CD4-positive, alpha-beta T cell (primary cell): ENCODE measurements at regions of chr18 and their contacts with region 1.

Region 1: GRCh38 chr18:22933206-22933957 is at the start of gene RBBP8:
- DNase-seq: peak; percentile 55 to 90 (median 74)
- ATAC-seq: peak; percentile 67
- H3K4me3 ChIP-seq: peak within 1 kb of the TSS; percentile 97
- H3K4me3 Mint-ChIP-seq: peak within 1 kb of the TSS; percentile 89
- H3K27ac ChIP-seq: peak within 1 kb of the TSS; percentile 80 to 95
- H3K27ac Mint-ChIP-seq: peak within 1 kb of the TSS; percentile 67
- H3K4me1 ChIP-seq: peaks cover 8% of the 10 kb centered on the region
- H3K4me1 Mint-ChIP-seq: peaks cover 13% of the 10 kb centered on the region
- H3K27me3 ChIP-seq: no peaks in the 10 kb centered on the region
- H3K27me3 Mint-ChIP-seq: no peaks in the 10 kb centered on the region
- CTCF ChIP-seq: no peak
- total RNA-seq, gene RBBP8: 1.2 to 2.5 TPM

Region 2: DNA sequence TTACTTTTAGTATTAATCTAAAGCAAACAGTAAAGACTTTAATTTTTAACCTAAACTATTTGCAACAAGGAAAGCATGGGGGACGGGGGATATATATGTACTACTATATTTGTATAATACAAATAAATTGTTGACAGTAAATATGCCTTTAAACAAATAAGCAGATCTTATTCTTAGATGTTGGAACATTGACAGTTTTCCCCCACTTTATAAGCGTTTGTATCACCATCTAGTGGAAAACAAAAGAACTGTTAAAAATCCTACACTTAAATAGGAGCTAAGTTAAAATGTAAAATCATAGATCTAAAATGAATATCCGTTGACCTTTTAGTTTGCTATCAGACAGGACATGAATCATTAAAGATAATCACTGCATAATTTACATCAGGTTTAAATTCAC is 49.8 kb after region 1 on chr18:
- CTCF ChIA-PET with region 1: interaction called, 7 read pairs
- POLR2A ChIA-PET with region 1: interaction called, 5 read pairs
- intact Hi-C with region 1: loop called (anchors 1 to 2 kb)
- DNase-seq: peak in 3 of 14 experiments; percentile 42 to 46 (median 45)
- ATAC-seq: no peak
- H3K4me3 ChIP-seq: no peak overlapping the region
- H3K4me3 Mint-ChIP-seq: no peak overlapping the region
- H3K27ac ChIP-seq: no peak overlapping the region
- H3K27ac Mint-ChIP-seq: no peak overlapping the region
- H3K4me1 ChIP-seq: no peaks in the 10 kb centered on the region
- H3K4me1 Mint-ChIP-seq: no peaks in the 10 kb centered on the region
- H3K27me3 ChIP-seq: no peaks in the 10 kb centered on the region
- H3K27me3 Mint-ChIP-seq: no peaks in the 10 kb centered on the region
- CTCF ChIP-seq: peak; percentile 68

Region 3: DNA sequence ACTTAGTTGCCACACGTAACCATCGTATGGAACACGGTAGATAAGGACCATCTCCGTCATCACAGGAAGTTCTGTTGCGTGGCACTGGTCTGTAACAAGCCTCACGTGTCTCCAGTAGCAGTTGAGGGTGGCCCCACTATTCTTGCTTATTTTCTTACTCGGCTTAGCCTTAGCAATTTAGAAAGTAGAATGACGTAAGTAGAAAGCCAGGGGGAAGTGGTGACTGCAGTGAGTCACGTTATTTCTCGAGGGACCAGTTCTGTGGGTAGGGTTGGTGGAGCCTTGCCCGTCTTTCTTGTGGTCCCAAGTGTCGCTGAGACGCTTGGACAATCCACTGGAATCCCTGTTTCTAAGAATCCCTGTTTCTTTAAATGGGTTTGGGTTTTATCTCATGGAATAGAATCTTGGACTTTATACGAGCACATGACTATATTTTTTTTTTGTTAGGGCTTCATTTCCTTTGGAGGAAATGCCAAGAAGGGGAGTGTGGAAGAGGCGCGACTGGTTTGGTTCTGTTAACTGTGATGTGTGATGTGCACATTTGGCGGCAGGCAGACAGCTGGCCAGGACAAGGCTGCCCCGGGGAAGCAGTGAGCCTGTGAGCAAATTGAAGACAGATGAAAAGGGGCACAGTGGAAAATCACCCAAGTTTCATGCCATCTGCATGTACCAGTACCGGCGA is 298.1 kb after region 1 on chr18:
- CTCF ChIA-PET with region 1: no interaction called
- POLR2A ChIA-PET with region 1: no interaction called
- intact Hi-C with region 1: loop called in 1 of 2 experiments (anchors 10 kb)
- DNase-seq: peak; percentile 26 to 93 (median 54)
- ATAC-seq: peak; percentile 88
- H3K4me3 ChIP-seq: no peak overlapping the region
- H3K4me3 Mint-ChIP-seq: peak overlapping the region; percentile 57
- H3K27ac ChIP-seq: peak overlapping the region in 1 of 2 donors; percentile 55
- H3K27ac Mint-ChIP-seq: peak overlapping the region; percentile 84
- H3K4me1 ChIP-seq: peaks cover 25% of the 10 kb centered on the region
- H3K4me1 Mint-ChIP-seq: peaks cover 36% of the 10 kb centered on the region
- H3K27me3 ChIP-seq: no peaks in the 10 kb centered on the region
- H3K27me3 Mint-ChIP-seq: no peaks in the 10 kb centered on the region
- CTCF ChIP-seq: no peak

Region 4: DNA sequence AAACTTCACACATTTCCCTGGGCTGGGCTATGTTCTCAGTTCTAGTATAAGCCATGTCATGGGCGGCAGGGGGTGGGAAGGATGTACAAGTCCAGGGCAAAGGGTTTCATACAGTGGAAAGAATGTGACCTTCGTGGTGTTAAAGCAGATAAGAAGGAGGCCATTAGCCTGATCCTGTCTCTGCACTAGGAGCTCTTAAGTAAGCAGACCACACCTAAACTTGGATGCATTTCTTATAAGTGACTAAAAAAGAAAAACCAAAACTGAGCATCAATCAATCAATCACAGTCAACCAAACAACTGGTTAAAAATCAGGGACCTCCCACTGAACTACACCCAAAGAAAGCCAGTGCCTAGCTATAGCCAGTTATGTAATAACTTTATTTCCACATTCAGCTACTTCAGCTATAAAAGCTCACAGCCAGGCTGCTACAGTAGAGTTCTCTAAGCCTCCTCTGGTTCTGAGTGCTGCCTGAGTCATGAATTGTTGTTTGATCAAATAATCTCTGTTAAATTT is 472.9 kb after region 1 on chr18:
- CTCF ChIA-PET with region 1: no interaction called
- POLR2A ChIA-PET with region 1: interaction called, 5 read pairs
- intact Hi-C with region 1: loop called (anchors 1 to 2 kb)
- DNase-seq: no peak
- ATAC-seq: no peak
- H3K4me3 ChIP-seq: no peak overlapping the region
- H3K4me3 Mint-ChIP-seq: no peak overlapping the region
- H3K27ac ChIP-seq: no peak overlapping the region
- H3K27ac Mint-ChIP-seq: no peak overlapping the region
- H3K4me1 ChIP-seq: no peaks in the 10 kb centered on the region
- H3K4me1 Mint-ChIP-seq: no peaks in the 10 kb centered on the region
- H3K27me3 ChIP-seq: no peaks in the 10 kb centered on the region
- H3K27me3 Mint-ChIP-seq: no peaks in the 10 kb centered on the region
- CTCF ChIP-seq: no peak

Region 5: DNA sequence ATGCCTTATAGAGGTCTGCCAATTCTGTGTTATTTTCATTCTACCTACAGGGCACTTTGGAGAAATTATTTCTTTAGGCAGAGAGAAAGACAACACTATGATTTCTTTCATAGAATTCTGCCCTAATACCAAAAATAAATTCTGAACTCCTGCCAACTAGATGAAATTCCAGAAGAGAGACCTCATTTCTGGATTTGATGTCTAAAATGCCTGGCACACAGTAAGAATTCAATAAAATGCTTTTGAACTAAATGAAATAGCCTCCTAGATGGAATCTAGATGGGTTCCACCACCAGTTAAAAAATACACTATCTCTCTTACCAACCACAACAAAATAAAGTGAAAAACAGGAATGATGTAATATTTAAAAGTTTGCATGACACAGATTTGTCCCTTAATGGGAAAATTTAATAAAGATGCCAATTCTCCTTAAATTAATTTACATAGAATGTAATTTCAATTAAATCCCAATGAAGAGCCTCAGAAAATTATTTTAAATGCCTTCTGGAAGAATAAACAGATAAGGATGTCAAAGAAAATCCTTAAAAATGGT is 1389.3 kb after region 1 on chr18:
- CTCF ChIA-PET with region 1: no interaction called
- POLR2A ChIA-PET with region 1: no interaction called
- intact Hi-C with region 1: no loop called
- DNase-seq: no peak
- ATAC-seq: no peak
- H3K4me3 ChIP-seq: no peak overlapping the region
- H3K4me3 Mint-ChIP-seq: no peak overlapping the region
- H3K27ac ChIP-seq: no peak overlapping the region
- H3K27ac Mint-ChIP-seq: no peak overlapping the region
- H3K4me1 ChIP-seq: no peaks in the 10 kb centered on the region
- H3K4me1 Mint-ChIP-seq: no peaks in the 10 kb centered on the region
- H3K27me3 ChIP-seq: no peaks in the 10 kb centered on the region
- H3K27me3 Mint-ChIP-seq: no peaks in the 10 kb centered on the region
- CTCF ChIP-seq: no peak